ENCODE measurements at regions of chr1 and their contacts with region 1.

Region 1: GRCh38 chr1:186302378-186302920 is 72.6 kb downstream of the TPR start:
- DNase-seq: no peak
- H3K4me3 Mint-ChIP-seq: no peak overlapping the region
- H3K27ac Mint-ChIP-seq: peak overlapping the region; percentile 84
- H3K4me1 Mint-ChIP-seq: peaks cover 77% of the 10 kb centered on the region
- H3K27me3 Mint-ChIP-seq: no peaks in the 10 kb centered on the region

Region 2: DNA sequence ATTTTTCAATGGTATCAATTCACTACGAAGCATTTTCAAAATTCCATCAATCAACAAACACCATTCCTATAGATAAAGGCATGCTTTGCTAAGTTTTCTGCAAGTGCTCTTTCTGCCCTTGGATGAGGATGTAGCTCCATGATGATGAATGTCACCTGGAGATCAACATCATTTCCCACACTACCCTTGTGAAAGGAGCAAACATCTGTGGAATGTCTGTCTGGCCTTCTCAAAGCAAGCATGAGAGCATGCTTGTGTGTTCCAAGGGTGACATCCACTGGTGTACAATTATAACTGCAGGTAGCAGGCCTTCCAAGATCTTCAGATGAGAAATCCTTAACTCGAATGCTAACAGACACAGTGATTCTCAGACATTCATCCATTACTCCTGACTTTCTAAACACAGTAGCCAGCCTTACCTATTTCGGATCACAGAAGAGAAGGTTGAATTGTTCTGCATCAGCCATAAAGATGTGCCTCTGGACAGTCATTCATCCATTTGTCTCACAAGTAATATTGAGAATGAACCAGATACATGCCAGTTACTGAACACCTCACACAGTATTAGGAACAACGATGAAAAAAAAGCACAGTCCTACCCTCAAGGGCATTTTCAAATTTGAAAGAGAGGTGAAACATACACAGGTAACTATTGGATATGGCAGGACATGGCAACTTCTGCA is 89.8 kb before region 1 on chr1:
- CTCF ChIA-PET with region 1: no interaction called
- POLR2A ChIA-PET with region 1: no interaction called
- DNase-seq: peak; percentile 47
- H3K4me3 Mint-ChIP-seq: no peak overlapping the region
- H3K27ac Mint-ChIP-seq: no peak overlapping the region
- H3K4me1 Mint-ChIP-seq: no peaks in the 10 kb centered on the region
- H3K27me3 Mint-ChIP-seq: peaks cover 36% of the 10 kb centered on the region

Region 3: GRCh38 chr1:186289943-186290545 is 12.4 kb before region 1 on chr1:
- CTCF ChIA-PET with region 1: interaction called, 19 read pairs
- POLR2A ChIA-PET with region 1: interaction called, 5 read pairs
- DNase-seq: no peak
- H3K4me3 Mint-ChIP-seq: no peak overlapping the region
- H3K27ac Mint-ChIP-seq: peak overlapping the region; percentile 88
- H3K4me1 Mint-ChIP-seq: peaks cover 67% of the 10 kb centered on the region
- H3K27me3 Mint-ChIP-seq: no peaks in the 10 kb centered on the region

Measured in activated CD4-positive, alpha-beta T cell treated with anti-CD3 and anti-CD28 coated beads, Interleukin-2, amount 10 ng/mL, durations not matched to agents 7 days and 5 days (primary cell).